CD14-positive monocyte (primary cell): ENCODE measurements at regions of chr11 and their contacts with region 1.

Region 1: DNA sequence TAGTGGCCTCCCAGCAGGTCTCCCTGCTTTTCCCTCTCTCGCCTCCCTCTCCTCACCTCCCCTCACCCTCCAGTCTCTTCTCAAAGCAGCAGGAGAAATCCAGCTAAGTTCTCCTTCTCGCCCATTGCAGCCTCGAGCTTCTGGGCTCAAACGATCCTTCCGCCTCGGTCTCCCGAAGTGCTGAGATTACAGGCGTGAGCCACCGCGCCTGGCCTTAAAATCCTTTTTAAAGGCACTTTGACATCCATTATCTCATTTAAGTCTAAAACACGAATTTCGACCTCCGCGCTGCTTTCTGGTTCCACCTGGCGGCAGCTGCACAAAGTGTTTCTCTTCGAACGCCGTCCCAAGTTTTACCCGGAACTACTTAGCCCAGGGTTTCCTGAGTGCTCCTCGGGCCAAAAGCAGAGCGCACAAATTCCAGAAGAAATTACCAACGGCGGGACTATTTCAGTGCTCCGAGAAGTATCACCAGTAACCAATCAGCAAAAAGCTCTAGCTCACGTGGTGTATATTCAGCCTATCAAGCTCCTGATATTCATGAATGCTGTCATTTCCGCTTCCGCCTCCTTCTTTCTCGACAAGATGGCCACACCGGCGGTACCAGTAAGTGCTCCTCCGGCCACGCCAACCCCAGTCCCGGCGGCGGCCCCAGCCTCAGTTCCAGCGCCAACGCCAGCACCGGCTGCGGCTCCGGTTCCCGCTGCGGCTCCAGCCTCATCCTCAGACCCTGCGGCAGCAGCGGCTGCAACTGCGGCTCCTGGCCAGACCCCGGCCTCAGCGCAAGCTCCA is at the start of gene EIF3F:
- DNase-seq: peak; percentile 98 to 100 (median 98)
- H3K4me3 ChIP-seq: peak within 1 kb of the TSS; percentile 61 to 85 (median 83)
- H3K4me3 Mint-ChIP-seq: peak within 1 kb of the TSS; percentile 85 to 98
- H3K27ac ChIP-seq: peak within 1 kb of the TSS; percentile 58 to 82
- H3K27ac Mint-ChIP-seq: peak within 1 kb of the TSS; percentile 87 to 96 (median 91)
- H3K4me1 ChIP-seq: peaks cover 18 to 25% of the 10 kb centered on the region in 2 donors
- H3K4me1 Mint-ChIP-seq: peaks cover 24% of the 10 kb centered on the region
- H3K27me3 ChIP-seq: no peaks in the 10 kb centered on the region
- H3K27me3 Mint-ChIP-seq: peaks cover 0 to 10% (median 0%) of the 10 kb centered on the region in 3 donors
- CTCF ChIP-seq: peak; percentile 84
- polyA plus RNA-seq, gene EIF3F: 179 to 286 (median 243) TPM

Region 2: DNA sequence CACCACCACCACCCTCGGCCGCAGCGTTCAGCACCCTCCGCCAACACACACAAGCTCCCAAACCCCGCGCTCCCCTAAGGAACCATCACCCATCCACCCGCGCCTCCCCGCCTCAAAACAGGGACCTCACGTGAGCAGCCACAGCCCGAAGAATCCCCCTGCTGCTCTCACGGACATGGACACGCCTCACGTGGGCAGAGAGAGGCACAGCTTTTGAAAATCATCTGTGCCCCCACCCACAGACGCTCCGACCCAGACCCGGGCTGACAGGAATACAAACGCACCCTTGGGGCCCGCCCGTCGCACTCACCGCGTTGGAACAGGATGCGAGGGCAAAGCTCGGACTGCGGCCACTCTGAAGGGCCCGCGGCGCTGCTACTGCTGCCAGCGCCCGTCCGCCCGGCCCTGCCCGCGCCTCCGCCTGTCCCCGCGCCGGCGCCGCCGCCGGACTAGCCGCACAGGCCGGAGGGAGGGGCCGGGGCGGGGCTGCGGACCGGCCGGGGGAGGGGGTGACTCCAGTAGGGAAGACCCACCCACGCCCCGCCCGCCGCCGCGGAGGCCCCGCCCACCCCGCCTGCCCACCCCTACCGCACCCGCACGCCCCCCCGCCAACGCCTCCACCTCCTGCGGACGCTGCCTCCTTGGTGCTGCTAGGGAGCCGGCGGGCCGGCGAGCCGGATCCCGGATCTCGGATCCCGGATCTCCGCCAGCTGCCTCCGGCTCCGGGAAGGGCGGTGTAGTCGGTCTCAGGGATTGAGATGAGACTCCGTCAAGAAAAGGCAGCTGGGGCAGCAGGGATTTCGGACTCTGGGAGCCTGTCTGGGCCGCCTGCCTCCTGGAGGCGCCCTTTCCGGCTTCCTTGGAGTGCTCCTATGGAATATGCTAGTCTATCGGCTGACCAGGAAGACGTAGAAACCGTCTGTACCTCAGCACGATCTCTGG is 1513.2 kb before region 1 on chr11 and contains the start of gene TRIM3:
- intact Hi-C with region 1: loop called in 1 of 2 experiments (anchors 10 kb)
- DNase-seq: peak; percentile 65 to 69 (median 68)
- H3K4me3 ChIP-seq: peak within 1 kb of the TSS; percentile 62 to 87 (median 81)
- H3K4me3 Mint-ChIP-seq: peak within 1 kb of the TSS; percentile 91 to 94
- H3K27ac ChIP-seq: peak within 1 kb of the TSS; percentile 70 to 73
- H3K27ac Mint-ChIP-seq: peak within 1 kb of the TSS; percentile 77 to 92 (median 84)
- H3K4me1 ChIP-seq: peaks cover 25% of the 10 kb centered on the region in 2 donors
- H3K4me1 Mint-ChIP-seq: peaks cover 27% of the 10 kb centered on the region
- H3K27me3 ChIP-seq: no peaks in the 10 kb centered on the region
- H3K27me3 Mint-ChIP-seq: peaks cover 0 to 7% (median 1%) of the 10 kb centered on the region in 3 donors
- CTCF ChIP-seq: no peak
- polyA plus RNA-seq, gene TRIM3: 1.7 to 36.2 (median 3.3) TPM

Region 3: GRCh38 chr11:7592711-7593110 is 394.3 kb before region 1 on chr11:
- intact Hi-C with region 1: loop called in 1 of 2 experiments (anchors 10 kb)
- DNase-seq: peak; percentile 84 to 93 (median 92)
- H3K4me3 ChIP-seq: peak overlapping the region in 2 of 3 experiments; percentile 42 to 71
- H3K4me3 Mint-ChIP-seq: peak overlapping the region; percentile 63 to 85
- H3K27ac ChIP-seq: peak overlapping the region; percentile 87 to 90
- H3K27ac Mint-ChIP-seq: peak overlapping the region; percentile 92 to 98 (median 96)
- H3K4me1 ChIP-seq: peaks cover 48 to 73% of the 10 kb centered on the region in 2 donors
- H3K4me1 Mint-ChIP-seq: peaks cover 71% of the 10 kb centered on the region
- H3K27me3 ChIP-seq: no peaks in the 10 kb centered on the region
- H3K27me3 Mint-ChIP-seq: peaks cover 0 to 5% (median 0%) of the 10 kb centered on the region in 3 donors
- CTCF ChIP-seq: no peak

Region 4: DNA sequence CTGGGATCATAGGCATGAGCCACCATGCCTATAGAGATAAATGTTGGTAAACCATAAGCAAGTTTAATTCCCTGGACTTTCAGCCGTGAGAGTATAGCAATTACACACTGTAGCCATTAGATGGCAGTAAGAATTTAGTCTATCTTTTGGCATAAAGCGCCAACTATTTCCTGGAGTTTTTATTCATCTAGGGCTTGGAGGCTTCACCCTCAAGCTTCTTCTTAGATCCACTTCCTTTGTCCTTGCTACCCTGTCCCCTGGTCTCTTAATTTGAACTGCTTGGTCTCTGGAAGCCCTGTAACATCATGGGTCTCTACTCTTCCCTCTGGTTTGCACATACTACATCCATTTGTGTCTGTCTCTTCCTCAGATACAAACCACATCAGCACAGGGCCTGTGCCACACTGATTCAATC is 94.1 kb before region 1 on chr11:
- intact Hi-C with region 1: loop called in 1 of 2 experiments (anchors 5 kb)
- DNase-seq: peak in 2 of 3 donors; percentile 6 to 14
- H3K4me3 ChIP-seq: no peak overlapping the region
- H3K4me3 Mint-ChIP-seq: no peak overlapping the region
- H3K27ac ChIP-seq: no peak overlapping the region
- H3K27ac Mint-ChIP-seq: no peak overlapping the region
- H3K4me1 ChIP-seq: no peaks in the 10 kb centered on the region
- H3K4me1 Mint-ChIP-seq: no peaks in the 10 kb centered on the region
- H3K27me3 ChIP-seq: peaks cover 4 to 8% of the 10 kb centered on the region in 2 donors
- H3K27me3 Mint-ChIP-seq: peaks cover 5 to 18% (median 9%) of the 10 kb centered on the region in 3 donors
- CTCF ChIP-seq: peak; percentile 76

Region 5: DNA sequence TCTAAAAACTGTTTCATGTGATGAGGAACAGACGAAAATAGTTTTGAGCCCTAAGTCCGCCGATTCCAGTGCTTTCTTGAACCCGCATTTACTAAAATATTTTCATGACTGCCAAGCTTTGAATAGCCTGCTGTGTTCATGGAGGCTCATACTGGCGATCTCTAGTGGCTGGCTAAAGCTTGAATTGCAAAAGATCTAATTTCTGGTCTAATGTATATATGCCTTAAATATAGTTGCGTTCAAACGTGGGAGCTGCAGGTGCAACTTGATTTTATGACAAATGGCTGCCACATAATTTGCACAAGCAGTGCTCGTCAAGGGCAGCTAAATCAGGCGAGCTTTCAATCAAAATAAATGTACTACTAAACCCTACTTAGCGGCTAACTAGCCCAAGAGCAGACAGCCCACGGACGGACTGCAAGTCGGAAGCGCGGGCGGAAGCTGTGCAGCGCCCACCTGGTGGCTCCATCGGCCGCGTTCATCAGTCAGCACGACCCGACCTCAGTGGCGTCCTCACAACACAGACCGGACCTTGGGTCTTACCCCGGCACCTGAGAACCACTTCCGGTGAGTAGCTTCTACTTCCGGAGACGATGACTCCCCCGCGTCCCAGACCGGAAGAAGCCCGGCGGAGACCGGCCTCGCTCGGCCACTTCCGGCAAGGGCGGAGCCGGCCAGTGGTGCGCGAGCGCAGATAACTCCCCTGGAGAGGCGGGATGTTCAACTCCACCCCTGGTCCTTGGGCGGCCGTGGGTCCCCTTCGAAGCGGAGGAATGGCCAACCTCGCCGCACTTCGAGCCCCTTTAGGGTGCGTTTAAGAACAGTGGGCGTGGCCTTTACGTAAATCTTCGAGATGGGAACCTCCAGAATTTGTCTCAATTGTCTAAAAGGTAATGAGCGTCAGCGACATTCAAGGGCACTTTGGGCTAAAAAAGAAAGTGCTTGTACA is 701.7 kb after region 1 on chr11:
- intact Hi-C with region 1: loop called (anchors 5 to 10 kb)
- DNase-seq: peak; percentile 94 to 96 (median 94)
- H3K4me3 ChIP-seq: peak overlapping the region; percentile 60 to 85 (median 73)
- H3K4me3 Mint-ChIP-seq: peak overlapping the region; percentile 96 to 98
- H3K27ac ChIP-seq: peak overlapping the region; percentile 69 to 86
- H3K27ac Mint-ChIP-seq: peak overlapping the region; percentile 92 to 96 (median 95)
- H3K4me1 ChIP-seq: peaks cover 22 to 31% of the 10 kb centered on the region in 2 donors
- H3K4me1 Mint-ChIP-seq: peaks cover 31% of the 10 kb centered on the region
- H3K27me3 ChIP-seq: no peaks in the 10 kb centered on the region
- H3K27me3 Mint-ChIP-seq: no peaks in the 10 kb centered on the region
- CTCF ChIP-seq: no peak